SK-N-SH (cell line): ENCODE measurements at regions of chr3 and their contacts with region 1.

Region 1: DNA sequence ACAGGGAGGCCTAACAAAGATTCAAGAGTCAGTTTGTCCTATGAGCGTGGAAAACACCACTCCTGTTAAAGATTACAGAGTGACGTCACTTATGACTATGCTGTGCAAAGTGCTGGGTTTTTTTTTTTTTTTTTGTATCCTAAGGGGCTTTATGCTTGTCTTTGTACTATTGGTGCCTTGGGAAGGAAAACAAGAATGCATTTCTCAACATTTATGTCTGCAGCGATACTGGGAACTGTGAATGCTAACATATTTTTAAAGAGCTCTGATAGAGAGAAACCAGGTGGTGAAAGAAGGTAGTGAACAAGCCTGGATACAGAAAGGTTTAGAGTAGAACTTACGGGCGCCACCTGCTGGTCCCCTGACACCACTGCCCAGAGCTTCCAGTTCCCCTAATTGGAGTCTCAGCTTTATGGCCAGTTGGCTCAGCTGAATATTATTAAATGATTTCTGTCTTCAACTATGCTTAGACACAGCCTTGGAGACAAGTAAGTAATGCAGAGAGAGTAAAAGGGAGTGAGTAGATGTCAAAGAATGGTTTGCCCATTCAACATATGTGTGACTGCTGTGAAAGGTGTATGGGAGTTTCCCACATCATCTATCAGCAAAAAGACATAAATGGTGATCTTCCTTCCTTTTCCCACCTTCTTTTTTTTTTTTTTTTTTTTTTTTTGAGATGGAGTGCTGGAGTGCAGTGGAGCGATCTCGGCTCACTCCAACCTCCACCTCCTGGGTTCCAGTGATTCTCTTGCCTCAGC is 807.9 kb upstream of the CFAP20DC start:
- DNase-seq: peak; percentile 62
- H3K4me3 ChIP-seq: peak overlapping the region in 1 of 2 experiments; percentile 23; a peak in 1 of 4 replicates
- H3K27ac ChIP-seq: no peak overlapping the region
- H3K4me1 ChIP-seq: no peaks in the 10 kb centered on the region; a peak in 2 of 4 replicates
- H3K27me3 ChIP-seq: no peaks in the 10 kb centered on the region; the same call in 1 of the 2 replicates
- CTCF ChIP-seq: peak; percentile 97
- EP300 ChIP-seq: no peak
- RAD21 ChIP-seq: peak; percentile 89

Region 2: DNA sequence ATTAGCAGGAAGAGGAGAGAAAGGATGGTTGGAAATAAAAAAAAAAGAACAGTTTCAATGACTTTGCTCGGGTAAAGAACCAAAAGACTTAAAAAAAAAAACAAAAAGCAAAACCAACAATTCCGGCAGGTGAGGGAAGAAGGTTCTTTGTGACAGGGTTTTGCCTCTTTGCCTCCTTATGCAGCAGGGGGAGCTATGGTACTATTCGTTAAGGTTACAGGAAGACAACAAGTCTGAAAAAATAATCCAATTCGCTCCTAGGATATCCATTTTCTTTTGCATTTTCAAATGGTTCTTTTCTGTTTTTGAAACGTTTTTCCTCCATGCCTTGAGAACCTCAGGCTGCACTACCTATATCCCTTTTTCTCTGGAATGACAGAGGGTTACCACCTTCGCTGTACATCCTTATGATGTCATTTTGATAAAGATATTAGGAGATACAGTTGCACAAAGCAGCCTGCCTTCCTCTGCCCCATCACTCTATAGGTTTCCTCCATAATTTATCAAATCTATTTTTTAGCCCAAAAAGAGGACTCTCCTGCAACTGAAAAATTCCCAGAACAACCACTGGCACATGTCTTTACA is 862.9 kb before region 1 on chr3:
- CTCF ChIA-PET with region 1: interaction called, 10 read pairs
- POLR2A ChIA-PET with region 1: interaction called, 3 read pairs
- DNase-seq: peak; percentile 52
- H3K4me3 ChIP-seq: 0 out of 4 replicates have a peak overlapping the region, but pooled peaks of 1 of the 2 experiments have one; percentile 9
- H3K27ac ChIP-seq: 0 out of 4 replicates have a peak overlapping the region, but pooled peaks of 1 of the 2 experiments have one; percentile 30
- H3K4me1 ChIP-seq: peaks cover 2 to 26% of the 10 kb centered on the region in 2 experiments
- H3K27me3 ChIP-seq: no peaks in the 10 kb centered on the region
- CTCF ChIP-seq: peak; percentile 87
- EP300 ChIP-seq: no peak
- RAD21 ChIP-seq: peak; percentile 89

Region 3: DNA sequence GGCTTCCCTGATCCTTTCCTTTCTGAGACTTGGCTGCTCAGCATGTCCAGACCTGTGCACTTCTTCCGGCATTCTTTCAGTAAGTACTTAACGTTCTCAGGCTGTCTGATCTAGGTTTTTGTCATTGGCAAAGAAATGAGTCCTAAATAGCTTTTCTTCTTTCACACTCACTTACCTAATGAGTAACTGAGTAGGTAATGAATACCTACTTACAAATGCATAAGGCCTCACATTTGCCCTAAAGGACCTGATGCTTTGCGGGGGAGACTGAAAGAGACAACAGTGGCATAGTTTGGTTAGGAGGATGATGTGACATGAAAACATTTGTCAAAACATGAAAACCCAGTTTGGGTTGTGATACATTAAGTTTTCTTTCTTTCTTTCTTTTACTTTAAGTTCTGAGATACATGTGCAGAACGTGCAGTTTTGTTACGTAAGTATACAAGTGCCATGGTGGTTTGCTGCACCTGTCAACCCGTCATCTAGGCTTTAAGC is 291.2 kb before region 1 on chr3:
- CTCF ChIA-PET with region 1: interaction called, 12 read pairs
- POLR2A ChIA-PET with region 1: no interaction called
- DNase-seq: no peak
- H3K4me3 ChIP-seq: no peak overlapping the region
- H3K27ac ChIP-seq: no peak overlapping the region
- H3K4me1 ChIP-seq: peaks cover 12 to 18% of the 10 kb centered on the region in 2 experiments; a peak in 2 of 4 replicates
- H3K27me3 ChIP-seq: no peaks in the 10 kb centered on the region
- CTCF ChIP-seq: no peak
- EP300 ChIP-seq: no peak
- RAD21 ChIP-seq: no peak

Region 4: GRCh38 chr3:59809710-59810444 is 47.9 kb before region 1 on chr3:
- CTCF ChIA-PET with region 1: interaction called, 16 read pairs
- POLR2A ChIA-PET with region 1: interaction called, 5 read pairs
- DNase-seq: peak; percentile 58
- H3K4me3 ChIP-seq: no peak overlapping the region
- H3K27ac ChIP-seq: no peak overlapping the region
- H3K4me1 ChIP-seq: peaks cover 7 to 27% of the 10 kb centered on the region in 2 experiments; a peak in 3 of 4 replicates
- H3K27me3 ChIP-seq: no peaks in the 10 kb centered on the region
- CTCF ChIP-seq: peak; percentile 51
- EP300 ChIP-seq: no peak
- RAD21 ChIP-seq: peak; percentile 80

Region 5: GRCh38 chr3:59845386-59845785 is 12.4 kb before region 1 on chr3:
- CTCF ChIA-PET with region 1: interaction called, 23 read pairs
- POLR2A ChIA-PET with region 1: no interaction called
- DNase-seq: no peak
- H3K4me3 ChIP-seq: no peak overlapping the region
- H3K27ac ChIP-seq: no peak overlapping the region
- H3K4me1 ChIP-seq: no peaks in the 10 kb centered on the region
- H3K27me3 ChIP-seq: no peaks in the 10 kb centered on the region
- CTCF ChIP-seq: no peak
- EP300 ChIP-seq: no peak
- RAD21 ChIP-seq: no peak

Region 6: GRCh38 chr3:60053526-60054265 is 195.9 kb after region 1 on chr3:
- CTCF ChIA-PET with region 1: no interaction called
- POLR2A ChIA-PET with region 1: no interaction called
- DNase-seq: no peak
- H3K4me3 ChIP-seq: no peak overlapping the region
- H3K27ac ChIP-seq: no peak overlapping the region
- H3K4me1 ChIP-seq: no peaks in the 10 kb centered on the region; a peak in 1 of 4 replicates
- H3K27me3 ChIP-seq: no peaks in the 10 kb centered on the region
- CTCF ChIP-seq: no peak
- EP300 ChIP-seq: no peak
- RAD21 ChIP-seq: no peak